Endothelial cell of umbilical vein (primary cell): ENCODE measurements at regions of chr12 and their contacts with region 1.

Region 1: DNA sequence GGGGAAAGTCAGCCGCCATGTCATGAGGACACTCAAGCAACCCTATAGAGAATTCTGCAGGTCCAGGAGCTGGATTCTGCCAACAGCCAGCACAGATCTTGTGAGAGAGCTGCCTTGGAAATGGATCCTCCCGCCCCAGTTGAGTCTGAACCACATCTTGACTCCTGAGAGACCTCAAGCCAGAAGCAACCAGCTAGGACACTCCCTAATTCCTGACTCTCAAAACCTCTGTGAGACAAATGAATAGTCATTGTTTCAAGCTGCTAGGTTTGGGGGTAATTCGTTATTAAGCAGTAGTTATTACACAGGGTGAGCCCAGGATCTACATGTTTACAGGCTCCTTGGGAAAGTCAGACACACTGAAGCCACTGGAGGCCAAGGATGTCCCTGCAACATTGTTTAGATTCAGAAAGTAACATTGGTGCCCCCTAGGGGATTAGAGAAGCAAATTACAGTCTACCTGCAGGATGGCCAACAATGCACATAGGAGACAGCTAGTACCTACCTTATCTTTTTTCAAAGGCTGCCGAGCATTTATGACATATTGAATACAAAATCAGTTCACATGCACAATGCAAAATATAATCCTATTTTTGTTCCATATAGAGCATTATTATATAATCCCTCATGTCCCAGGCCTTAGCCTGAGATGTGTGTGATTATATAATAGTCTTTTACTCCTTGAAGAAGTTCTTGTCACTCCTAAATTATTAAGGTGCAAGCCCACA is 57.9 kb upstream of the FICD start:
- DNase-seq: peak; percentile 51
- H3K4me3 ChIP-seq: no peak overlapping the region
- H3K27ac ChIP-seq: no peak overlapping the region
- H3K4me1 ChIP-seq: no peaks in the 10 kb centered on the region
- H3K27me3 ChIP-seq: no peaks in the 10 kb centered on the region
- CTCF ChIP-seq: peak; percentile 57 to 65
- POLR2A ChIP-seq: no peak

Region 2: GRCh38 chr12:107992870-107993451 is 464.2 kb before region 1 on chr12:
- CTCF ChIA-PET with region 1: interaction called, 7 read pairs
- POLR2A ChIA-PET with region 1: no interaction called
- dilution Hi-C with region 1: no loop called
- intact Hi-C with region 1: loop called (anchors 1 kb)
- DNase-seq: peak; percentile 20
- H3K4me3 ChIP-seq: no peak overlapping the region
- H3K27ac ChIP-seq: no peak overlapping the region
- H3K4me1 ChIP-seq: no peaks in the 10 kb centered on the region
- H3K27me3 ChIP-seq: no peaks in the 10 kb centered on the region
- CTCF ChIP-seq: peak; percentile 10 to 36
- POLR2A ChIP-seq: no peak

Region 3: GRCh38 chr12:108099073-108099472 is 358.1 kb before region 1 on chr12:
- CTCF ChIA-PET with region 1: no interaction called
- POLR2A ChIA-PET with region 1: no interaction called
- dilution Hi-C with region 1: no loop called
- intact Hi-C with region 1: loop called (anchors 1 kb)
- DNase-seq: peak; percentile 3
- H3K4me3 ChIP-seq: no peak overlapping the region
- H3K27ac ChIP-seq: no peak overlapping the region
- H3K4me1 ChIP-seq: no peaks in the 10 kb centered on the region
- H3K27me3 ChIP-seq: no peaks in the 10 kb centered on the region
- CTCF ChIP-seq: peak; percentile 1 to 4
- POLR2A ChIP-seq: no peak

Region 4: DNA sequence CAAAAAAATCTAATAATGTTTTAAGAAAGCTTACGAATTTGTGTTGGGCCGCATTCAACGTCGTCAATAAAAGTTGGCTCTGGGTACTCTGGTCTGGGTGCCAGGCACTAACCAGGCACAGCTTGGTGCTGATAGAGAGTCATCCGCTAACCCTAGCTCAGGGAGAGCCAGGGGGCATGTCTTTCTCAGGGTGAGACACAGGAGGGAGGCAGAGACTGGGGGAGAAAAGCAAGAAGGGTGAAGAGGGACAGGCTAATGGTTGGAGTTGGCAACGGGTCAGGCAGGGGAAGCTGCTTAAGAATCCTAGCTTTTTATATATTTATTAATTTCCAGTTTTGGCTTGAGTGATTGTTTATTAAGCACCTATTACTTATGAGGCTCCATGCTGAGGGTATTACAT is 223.0 kb before region 1 on chr12:
- CTCF ChIA-PET with region 1: interaction called, 16 read pairs
- POLR2A ChIA-PET with region 1: no interaction called
- dilution Hi-C with region 1: no loop called
- intact Hi-C with region 1: no loop called
- DNase-seq: peak; percentile 3
- H3K4me3 ChIP-seq: no peak overlapping the region
- H3K27ac ChIP-seq: no peak overlapping the region
- H3K4me1 ChIP-seq: no peaks in the 10 kb centered on the region
- H3K27me3 ChIP-seq: no peaks in the 10 kb centered on the region
- CTCF ChIP-seq: peak in 1 of 2 donors; percentile 18
- POLR2A ChIP-seq: no peak

Region 5: GRCh38 chr12:108446766-108447165 is 10.4 kb before region 1 on chr12:
- CTCF ChIA-PET with region 1: interaction called, 10 read pairs
- POLR2A ChIA-PET with region 1: no interaction called
- dilution Hi-C with region 1: no loop called
- intact Hi-C with region 1: no loop called
- DNase-seq: no peak
- H3K4me3 ChIP-seq: no peak overlapping the region
- H3K27ac ChIP-seq: no peak overlapping the region
- H3K4me1 ChIP-seq: peaks cover 3% of the 10 kb centered on the region
- H3K27me3 ChIP-seq: no peaks in the 10 kb centered on the region
- CTCF ChIP-seq: no peak
- POLR2A ChIP-seq: no peak

Region 6: DNA sequence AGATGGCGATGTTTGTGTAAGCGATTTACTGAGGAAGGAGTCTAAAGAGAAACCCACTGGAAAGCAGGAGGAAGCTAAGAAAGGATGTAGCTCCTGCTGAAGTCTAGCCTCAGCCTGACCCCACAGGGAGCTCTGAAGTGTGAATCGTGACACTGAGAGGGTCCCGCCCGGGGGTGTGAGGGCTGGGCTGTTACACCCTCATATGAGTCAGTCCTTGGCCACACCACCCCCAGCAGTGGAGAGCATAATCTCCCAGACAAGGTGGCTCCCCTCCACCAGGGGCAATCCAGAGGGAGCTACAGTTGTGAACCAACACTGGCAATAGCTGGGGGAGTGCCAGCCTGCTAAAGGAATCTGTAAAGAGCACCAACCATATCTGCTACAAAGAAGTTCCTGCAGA is 532.2 kb after region 1 on chr12:
- CTCF ChIA-PET with region 1: no interaction called
- POLR2A ChIA-PET with region 1: no interaction called
- dilution Hi-C with region 1: no loop called
- intact Hi-C with region 1: no loop called
- DNase-seq: no peak
- H3K4me3 ChIP-seq: no peak overlapping the region
- H3K27ac ChIP-seq: no peak overlapping the region
- H3K4me1 ChIP-seq: no peaks in the 10 kb centered on the region
- H3K27me3 ChIP-seq: no peaks in the 10 kb centered on the region
- CTCF ChIP-seq: no peak
- POLR2A ChIP-seq: no peak